AG04450 (cell line): ENCODE measurements at regions of chr11 and their contacts with region 1.

Region 1: GRCh38 chr11:112289588-112290492 is 29.2 kb upstream of the PLET1 start:
- DNase-seq: no peak
- H3K4me3 ChIP-seq: peak overlapping the region; percentile 78
- H3K27ac ChIP-seq: no peak overlapping the region
- H3K27me3 ChIP-seq: no peaks in the 10 kb centered on the region
- CTCF ChIP-seq: peak; percentile 65

Region 2: GRCh38 chr11:112195906-112196305 is 93.9 kb before region 1 on chr11:
- CTCF ChIA-PET with region 1: no interaction called
- POLR2A ChIA-PET with region 1: interaction called, 15 read pairs
- DNase-seq: no peak
- H3K4me3 ChIP-seq: no peak overlapping the region
- H3K27ac ChIP-seq: no peak overlapping the region
- H3K27me3 ChIP-seq: no peaks in the 10 kb centered on the region
- CTCF ChIP-seq: no peak

Region 3: GRCh38 chr11:112555491-112556364 is 265.9 kb after region 1 on chr11:
- CTCF ChIA-PET with region 1: interaction called, 25 read pairs
- POLR2A ChIA-PET with region 1: no interaction called
- DNase-seq: no peak
- H3K4me3 ChIP-seq: no peak overlapping the region
- H3K27ac ChIP-seq: peak overlapping the region; percentile 11
- H3K27me3 ChIP-seq: peaks cover 2% of the 10 kb centered on the region
- CTCF ChIP-seq: peak; percentile 78